B cell (primary cell): ENCODE measurements at regions of chr1 and their contacts with region 1.

Region 1: GRCh38 chr1:91500756-91501522 is at the start of gene CDC7:
- DNase-seq: peak; percentile 92
- ATAC-seq: peak; percentile 87
- H3K4me3 ChIP-seq: peak within 1 kb of the TSS; percentile 85 to 95 (median 90)
- H3K4me3 Mint-ChIP-seq: no peak within 1 kb of the TSS
- H3K27ac ChIP-seq: peak within 1 kb of the TSS; percentile 61 to 82
- H3K27ac Mint-ChIP-seq: no peak within 1 kb of the TSS
- H3K4me1 ChIP-seq: peaks cover 14 to 15% of the 10 kb centered on the region in 2 donors
- H3K4me1 Mint-ChIP-seq: peaks cover 17% of the 10 kb centered on the region
- H3K27me3 ChIP-seq: no peaks in the 10 kb centered on the region
- H3K27me3 Mint-ChIP-seq: no peaks in the 10 kb centered on the region
- CTCF ChIP-seq: peak; percentile 59
- total RNA-seq, gene CDC7: 7.4 and 8.7 TPM in 2 replicates

Region 2: GRCh38 chr1:91404151-91405012 is 96.6 kb before region 1 on chr1 and contains the start of gene HFM1:
- CTCF ChIA-PET with region 1: no interaction called
- POLR2A ChIA-PET with region 1: no interaction called
- intact Hi-C with region 1: loop called (anchors 2 kb)
- DNase-seq: peak; percentile 71
- ATAC-seq: peak; percentile 98
- H3K4me3 ChIP-seq: peak within 1 kb of the TSS in 3 of 5 experiments; percentile 43 to 60 (median 56)
- H3K4me3 Mint-ChIP-seq: peak within 1 kb of the TSS; percentile 86
- H3K27ac ChIP-seq: no peak within 1 kb of the TSS
- H3K27ac Mint-ChIP-seq: no peak within 1 kb of the TSS
- H3K4me1 ChIP-seq: peaks cover 10 to 16% of the 10 kb centered on the region in 2 donors
- H3K4me1 Mint-ChIP-seq: peaks cover 10% of the 10 kb centered on the region
- H3K27me3 ChIP-seq: peaks cover 0 to 22% (median 7%) of the 10 kb centered on the region in 4 experiments
- H3K27me3 Mint-ChIP-seq: peaks cover 34% of the 10 kb centered on the region
- CTCF ChIP-seq: no peak
- total RNA-seq, gene HFM1: 0.51 TPM in 1 of 2 replicates, not detected in the other

Region 3: GRCh38 chr1:92080128-92080985 is 579.4 kb after region 1 on chr1 and contains the start of gene BTBD8:
- CTCF ChIA-PET with region 1: no interaction called
- POLR2A ChIA-PET with region 1: no interaction called
- intact Hi-C with region 1: loop called (anchors 2 kb)
- DNase-seq: peak; percentile 84
- ATAC-seq: peak; percentile 99
- H3K4me3 ChIP-seq: peak within 1 kb of the TSS; percentile 44 to 75 (median 74)
- H3K4me3 Mint-ChIP-seq: peak within 1 kb of the TSS; percentile 98
- H3K27ac ChIP-seq: peak within 1 kb of the TSS in 1 of 2 donors; percentile 39
- H3K27ac Mint-ChIP-seq: peak within 1 kb of the TSS; percentile 84
- H3K4me1 ChIP-seq: peaks cover 0 to 11% of the 10 kb centered on the region in 2 donors
- H3K4me1 Mint-ChIP-seq: peaks cover 12% of the 10 kb centered on the region
- H3K27me3 ChIP-seq: no peaks in the 10 kb centered on the region
- H3K27me3 Mint-ChIP-seq: peaks cover 4% of the 10 kb centered on the region
- CTCF ChIP-seq: no peak
- total RNA-seq, gene BTBD8: 1.9 and 2.1 TPM in 2 replicates